ENCODE measurements at regions of chrX and their contacts with region 1.

Region 1: GRCh38 chrX:48021026-48021900 is 14.5 kb downstream of the SPACA5 start:
- DNase-seq: peak; percentile 37
- CTCF ChIP-seq: no peak

Region 2: GRCh38 chrX:47751670-47752069 is 269.6 kb before region 1 on chrX:
- in situ Hi-C with region 1: loop called (anchors 10 kb)
- DNase-seq: peak; percentile 18
- CTCF ChIP-seq: peak; percentile 48

Region 3: GRCh38 chrX:47836164-47837072 is 184.8 kb before region 1 on chrX and contains the start of gene ZNF81:
- in situ Hi-C with region 1: loop called (anchors 10 kb)
- DNase-seq: peak; percentile 83
- CTCF ChIP-seq: no peak

Measured in GM13976 (cell line).